Activated CD8-positive, alpha-beta T cell treated with anti-CD3 and anti-CD28 coated beads for 36 hours (primary cell): ENCODE measurements at regions of chr19 and their contacts with region 1.

Region 1: DNA sequence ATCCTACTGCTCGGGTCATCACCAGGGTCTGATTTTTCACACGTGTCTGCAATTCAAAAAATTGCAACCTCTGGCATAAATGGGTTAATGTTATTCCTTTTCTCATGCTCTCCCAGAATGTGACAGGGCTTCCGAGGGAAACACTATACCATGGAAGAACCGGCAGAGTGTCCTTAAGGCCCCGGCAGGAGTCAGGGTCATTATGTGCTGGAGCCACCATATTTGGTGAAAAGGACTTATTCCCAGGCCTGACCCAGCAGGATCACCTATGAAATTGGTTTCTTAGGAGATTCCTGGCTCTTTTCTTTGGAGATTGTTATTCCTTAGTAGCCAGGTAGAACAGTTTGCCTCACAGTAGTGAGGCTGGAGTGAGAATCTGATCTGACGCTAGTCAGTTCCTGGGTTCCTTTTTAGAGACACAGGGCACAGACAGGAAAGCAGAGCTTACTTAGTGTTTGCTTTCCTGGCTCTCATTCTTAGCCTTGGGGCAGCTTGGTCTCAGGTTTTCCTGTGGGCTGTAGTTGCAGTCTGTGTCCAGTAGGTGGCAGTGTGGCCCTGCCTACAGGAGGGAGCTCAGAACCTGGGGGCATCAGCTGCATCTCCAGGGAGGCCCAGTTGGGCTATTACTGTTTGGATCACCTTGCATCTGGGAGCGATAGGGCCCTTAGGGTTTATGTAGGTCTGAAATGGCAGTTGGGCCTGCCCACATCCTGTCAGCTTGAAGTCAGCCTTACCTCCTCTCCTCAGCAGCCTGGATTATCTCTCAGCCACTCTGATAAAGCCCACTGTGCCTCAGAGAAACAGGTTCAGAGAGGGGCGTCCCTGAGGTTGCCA is 12.4 kb downstream of the SNRNP70 start:
- DNase-seq: peak; percentile 81
- ATAC-seq: peak; percentile 92
- H3K4me3 Mint-ChIP-seq: no peak overlapping the region
- H3K27ac Mint-ChIP-seq: peak overlapping the region; percentile 46
- H3K4me1 Mint-ChIP-seq: peaks cover 2% of the 10 kb centered on the region
- H3K27me3 Mint-ChIP-seq: no peaks in the 10 kb centered on the region
- CTCF ChIP-seq: peak; percentile 99

Region 2: DNA sequence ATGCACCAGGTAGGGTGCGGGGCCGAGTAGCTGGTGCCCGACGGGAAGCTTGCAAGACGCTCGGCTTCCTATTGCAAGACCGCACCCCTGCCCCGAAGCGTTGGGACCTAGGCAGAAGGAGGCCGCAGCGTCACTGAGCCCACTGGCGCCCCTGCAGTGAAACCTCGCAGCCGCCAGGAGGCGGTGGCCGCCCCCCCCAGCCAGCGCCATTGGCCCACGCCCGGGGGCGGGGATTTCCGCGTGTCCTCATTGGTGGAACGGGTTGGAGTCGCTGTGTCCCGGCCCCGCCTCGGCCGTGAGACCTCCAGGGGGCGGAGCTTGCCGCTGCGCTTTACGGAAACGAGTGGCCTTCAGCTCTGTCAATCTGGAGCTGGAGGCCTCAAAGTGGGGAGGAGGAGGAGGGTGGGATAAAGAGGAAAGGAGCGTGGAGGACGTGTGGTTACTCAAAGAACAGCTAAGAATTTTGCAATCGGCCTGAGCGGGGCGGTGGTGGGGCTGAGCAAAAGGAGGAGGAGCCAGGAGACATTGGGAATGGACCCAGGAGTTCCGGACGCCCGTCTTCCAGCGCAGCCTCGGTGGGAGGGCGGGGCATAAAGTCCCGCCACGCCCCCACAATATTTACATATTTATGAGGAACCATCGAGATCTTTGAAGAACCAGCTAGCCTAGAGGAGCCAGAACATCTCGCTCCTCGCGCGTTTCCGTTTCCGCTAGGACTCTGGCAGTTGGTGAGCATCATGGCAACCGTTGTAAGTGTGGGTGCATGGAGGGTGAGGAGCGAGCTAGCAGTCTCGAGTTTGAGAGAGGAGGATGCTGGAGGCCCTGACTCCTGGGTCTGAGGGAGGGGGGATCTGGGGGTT is 104.3 kb before region 1 on chr19 and contains the starts of genes GYS1 and RUVBL2:
- CTCF ChIA-PET with region 1: interaction called, 12 read pairs
- POLR2A ChIA-PET with region 1: interaction called, 3 read pairs
- intact Hi-C with region 1: no loop called
- DNase-seq: peak; percentile 100
- ATAC-seq: peak; percentile 95
- H3K4me3 Mint-ChIP-seq: peak within 1 kb of the TSS; percentile 95
- H3K27ac Mint-ChIP-seq: peak within 1 kb of the TSS; percentile 98
- H3K4me1 Mint-ChIP-seq: peaks cover 42% of the 10 kb centered on the region
- H3K27me3 Mint-ChIP-seq: no peaks in the 10 kb centered on the region
- CTCF ChIP-seq: peak; percentile 97
- total RNA-seq, gene GYS1: 58.1 to 58.7 TPM
- total RNA-seq, gene RUVBL2: 175 to 176 TPM

Region 3: GRCh38 chr19:49085020-49085867 is 12.4 kb before region 1 on chr19 and contains the start of gene SNRNP70:
- CTCF ChIA-PET with region 1: interaction called, 52 read pairs
- POLR2A ChIA-PET with region 1: interaction called, 10 read pairs
- intact Hi-C with region 1: no loop called
- DNase-seq: peak; percentile 99
- ATAC-seq: peak; percentile 98
- H3K4me3 Mint-ChIP-seq: peak within 1 kb of the TSS; percentile 99
- H3K27ac Mint-ChIP-seq: peak within 1 kb of the TSS; percentile 94
- H3K4me1 Mint-ChIP-seq: peaks cover 33% of the 10 kb centered on the region
- H3K27me3 Mint-ChIP-seq: no peaks in the 10 kb centered on the region
- CTCF ChIP-seq: no peak
- total RNA-seq, gene SNRNP70: 187 to 188 TPM

Region 4: GRCh38 chr19:49127674-49128544 is 30.2 kb after region 1 on chr19:
- CTCF ChIA-PET with region 1: interaction called, 17 read pairs
- POLR2A ChIA-PET with region 1: interaction called, 4 read pairs
- intact Hi-C with region 1: no loop called
- DNase-seq: peak; percentile 95
- ATAC-seq: peak; percentile 98
- H3K4me3 Mint-ChIP-seq: peak overlapping the region; percentile 82
- H3K27ac Mint-ChIP-seq: peak overlapping the region; percentile 87
- H3K4me1 Mint-ChIP-seq: peaks cover 8% of the 10 kb centered on the region
- H3K27me3 Mint-ChIP-seq: no peaks in the 10 kb centered on the region
- CTCF ChIP-seq: no peak

Region 5: DNA sequence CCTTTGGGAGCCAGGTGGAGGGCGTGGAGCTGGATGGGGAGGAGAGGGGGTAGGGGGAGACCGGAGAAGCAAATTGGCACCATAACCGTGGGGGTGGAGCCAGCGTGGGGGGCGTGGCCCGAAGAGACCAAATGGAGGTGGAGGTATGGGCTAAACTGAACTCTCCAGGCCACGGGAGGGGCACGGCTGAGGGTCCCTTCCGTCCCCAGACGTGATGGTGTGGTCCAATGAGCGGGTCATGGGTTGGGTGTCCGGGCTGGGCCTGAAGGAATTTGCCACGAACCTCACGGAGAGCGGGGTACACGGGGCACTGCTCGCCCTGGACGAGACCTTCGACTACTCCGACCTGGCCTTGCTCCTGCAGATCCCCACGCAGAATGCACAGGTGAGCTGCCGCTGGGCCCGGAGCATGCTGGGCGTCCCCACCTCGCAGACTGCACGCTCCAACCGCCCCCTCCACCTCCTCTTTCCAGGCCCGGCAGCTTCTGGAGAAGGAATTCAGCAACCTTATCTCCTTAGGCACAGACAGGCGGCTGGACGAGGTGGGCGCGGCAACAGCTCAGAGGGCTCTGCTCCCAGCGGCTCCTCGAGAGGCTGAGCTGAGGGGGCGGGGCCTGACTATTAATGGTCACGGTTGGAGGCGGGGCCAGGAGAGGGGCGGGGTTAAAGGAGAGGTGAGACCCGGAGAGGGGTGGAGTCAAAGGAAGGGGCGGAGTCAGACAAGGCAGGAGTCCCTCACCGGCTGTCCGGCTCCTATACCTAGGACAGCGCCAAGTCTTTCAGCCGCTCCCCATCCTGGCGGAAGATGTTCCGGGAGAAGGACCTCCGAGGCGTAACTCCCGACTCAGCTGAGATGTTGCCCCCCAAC is 51.3 kb after region 1 on chr19:
- CTCF ChIA-PET with region 1: interaction called, 36 read pairs
- POLR2A ChIA-PET with region 1: interaction called, 4 read pairs
- intact Hi-C with region 1: loop called (anchors 5 kb)
- DNase-seq: peak; percentile 95
- ATAC-seq: peak; percentile 68
- H3K4me3 Mint-ChIP-seq: peak overlapping the region; percentile 62
- H3K27ac Mint-ChIP-seq: no peak overlapping the region
- H3K4me1 Mint-ChIP-seq: peaks cover 27% of the 10 kb centered on the region
- H3K27me3 Mint-ChIP-seq: peaks cover 63% of the 10 kb centered on the region
- CTCF ChIP-seq: no peak

Region 6: GRCh38 chr19:49301165-49301865 is 203.6 kb after region 1 on chr19:
- CTCF ChIA-PET with region 1: no interaction called
- POLR2A ChIA-PET with region 1: no interaction called
- intact Hi-C with region 1: no loop called
- DNase-seq: peak; percentile 93
- ATAC-seq: peak; percentile 99
- H3K4me3 Mint-ChIP-seq: no peak overlapping the region
- H3K27ac Mint-ChIP-seq: no peak overlapping the region
- H3K4me1 Mint-ChIP-seq: no peaks in the 10 kb centered on the region
- H3K27me3 Mint-ChIP-seq: no peaks in the 10 kb centered on the region
- CTCF ChIP-seq: peak; percentile 96

Region 7: GRCh38 chr19:49363268-49364082 is 265.8 kb after region 1 on chr19 and contains the start of gene DKKL1:
- CTCF ChIA-PET with region 1: no interaction called
- POLR2A ChIA-PET with region 1: no interaction called
- intact Hi-C with region 1: no loop called
- DNase-seq: peak; percentile 91
- ATAC-seq: peak; percentile 90
- H3K4me3 Mint-ChIP-seq: no peak within 1 kb of the TSS
- H3K27ac Mint-ChIP-seq: no peak within 1 kb of the TSS
- H3K4me1 Mint-ChIP-seq: peaks cover 8% of the 10 kb centered on the region
- H3K27me3 Mint-ChIP-seq: peaks cover 28% of the 10 kb centered on the region
- CTCF ChIP-seq: no peak
- total RNA-seq, gene DKKL1: not detected